ENCODE measurements at regions of chr4 and their contacts with region 1.

Region 1: GRCh38 chr4:26867914-26868684 is 7.5 kb downstream of the STIM2 start:
- DNase-seq: no peak
- ATAC-seq: peak; percentile 36
- H3K4me3 ChIP-seq: no peak overlapping the region; the same call in 1 of the 2 replicates
- H3K27ac ChIP-seq: 0 out of 2 replicates have a peak overlapping the region, but pooled peaks have one; percentile 37
- H3K4me1 ChIP-seq: peaks cover 9% of the 10 kb centered on the region
- H3K27me3 ChIP-seq: no peaks in the 10 kb centered on the region
- CTCF ChIP-seq: no peak
- EP300 ChIP-seq: no peak
- POLR2A ChIP-seq: no peak
- RAD21 ChIP-seq: no peak

Region 2: GRCh38 chr4:26447378-26447777 is 420.7 kb before region 1 on chr4:
- CTCF ChIA-PET with region 1: no interaction called
- POLR2A ChIA-PET with region 1: no interaction called
- RAD21 ChIA-PET with region 1: no interaction called
- SMC1A ChIA-PET with region 1: no interaction called
- in situ Hi-C with region 1: no loop called
- intact Hi-C with region 1: no loop called
- DNase-seq: no peak
- ATAC-seq: no peak
- H3K4me3 ChIP-seq: no peak overlapping the region
- H3K27ac ChIP-seq: no peak overlapping the region
- H3K4me1 ChIP-seq: no peaks in the 10 kb centered on the region
- H3K27me3 ChIP-seq: no peaks in the 10 kb centered on the region
- CTCF ChIP-seq: no peak
- EP300 ChIP-seq: no peak
- POLR2A ChIP-seq: no peak
- RAD21 ChIP-seq: no peak

Region 3: DNA sequence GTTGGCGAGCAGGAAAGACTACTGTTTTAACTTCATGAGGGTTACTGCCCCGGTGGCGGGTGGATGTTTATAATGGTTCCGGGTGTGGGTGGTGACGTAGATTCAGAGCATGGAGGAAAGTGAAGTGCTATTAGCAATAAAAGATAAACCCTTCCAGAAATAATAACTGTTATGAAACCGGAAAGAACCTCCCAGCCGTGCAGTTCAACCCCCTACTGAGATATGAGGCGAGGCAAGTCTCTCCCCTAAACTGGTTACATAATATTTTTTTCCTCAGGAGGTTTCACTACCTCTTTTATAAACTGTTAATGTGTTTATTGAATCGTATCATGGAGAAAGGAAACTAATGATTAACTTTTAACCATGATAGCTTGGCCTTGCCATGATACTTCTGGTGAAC is 41.4 kb before region 1 on chr4:
- CTCF ChIA-PET with region 1: no interaction called
- POLR2A ChIA-PET with region 1: interaction called, 3 read pairs
- RAD21 ChIA-PET with region 1: no interaction called
- SMC1A ChIA-PET with region 1: interaction called, 12 read pairs
- in situ Hi-C with region 1: no loop called
- intact Hi-C with region 1: no loop called
- DNase-seq: peak; percentile 72
- ATAC-seq: peak; percentile 94
- H3K4me3 ChIP-seq: 0 out of 2 replicates have a peak overlapping the region, but pooled peaks have one; percentile 31
- H3K27ac ChIP-seq: peak overlapping the region; percentile 20; the same call in 1 of the 2 replicates
- H3K4me1 ChIP-seq: peaks cover 21% of the 10 kb centered on the region
- H3K27me3 ChIP-seq: no peaks in the 10 kb centered on the region
- CTCF ChIP-seq: no peak
- EP300 ChIP-seq: peak; percentile 91 to 93
- POLR2A ChIP-seq: no peak
- RAD21 ChIP-seq: no peak

Region 4: GRCh38 chr4:26899991-26900390 is 31.9 kb after region 1 on chr4:
- CTCF ChIA-PET with region 1: interaction called, 3 read pairs
- POLR2A ChIA-PET with region 1: no interaction called
- RAD21 ChIA-PET with region 1: interaction called, 10 read pairs
- SMC1A ChIA-PET with region 1: interaction called, 5 read pairs
- in situ Hi-C with region 1: no loop called
- intact Hi-C with region 1: no loop called
- DNase-seq: no peak
- ATAC-seq: peak; percentile 26; the same call in 2 of the 3 replicates
- H3K4me3 ChIP-seq: no peak overlapping the region
- H3K27ac ChIP-seq: no peak overlapping the region
- H3K4me1 ChIP-seq: no peaks in the 10 kb centered on the region
- H3K27me3 ChIP-seq: no peaks in the 10 kb centered on the region
- CTCF ChIP-seq: no peak
- EP300 ChIP-seq: no peak
- POLR2A ChIP-seq: no peak
- RAD21 ChIP-seq: no peak

Region 5: DNA sequence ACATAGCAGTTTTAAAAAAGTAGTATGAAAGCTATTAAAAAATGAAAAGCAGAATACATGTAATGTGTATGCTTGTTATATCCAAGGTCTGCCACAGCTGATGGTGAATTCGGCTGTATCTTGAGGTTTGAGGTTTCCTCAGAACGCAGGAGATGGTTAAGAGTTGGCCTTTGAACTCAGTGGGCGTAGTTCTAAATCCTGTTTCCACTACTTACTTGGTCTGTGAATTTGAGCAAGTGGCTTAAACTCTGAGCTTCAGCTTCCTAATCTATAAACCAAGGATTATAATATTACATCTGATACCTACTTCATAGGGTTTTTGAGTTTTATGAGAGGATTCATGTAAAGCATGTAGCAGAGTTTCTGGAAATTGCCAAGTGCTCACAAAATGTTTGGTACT is 117.8 kb after region 1 on chr4:
- CTCF ChIA-PET with region 1: no interaction called
- POLR2A ChIA-PET with region 1: interaction called, 6 read pairs
- RAD21 ChIA-PET with region 1: interaction called, 25 read pairs
- SMC1A ChIA-PET with region 1: interaction called, 21 read pairs
- in situ Hi-C with region 1: no loop called
- intact Hi-C with region 1: no loop called
- DNase-seq: peak; percentile 44
- ATAC-seq: peak; percentile 96
- H3K4me3 ChIP-seq: no peak overlapping the region
- H3K27ac ChIP-seq: no peak overlapping the region
- H3K4me1 ChIP-seq: peaks cover 14% of the 10 kb centered on the region
- H3K27me3 ChIP-seq: no peaks in the 10 kb centered on the region
- CTCF ChIP-seq: no peak
- EP300 ChIP-seq: 0 out of 4 replicates have a peak, but pooled peaks of 1 of the 2 experiments have one; percentile 21
- POLR2A ChIP-seq: no peak
- RAD21 ChIP-seq: no peak

Region 6: GRCh38 chr4:26992657-26993361 is 124.7 kb after region 1 on chr4:
- CTCF ChIA-PET with region 1: interaction called, 3 read pairs
- POLR2A ChIA-PET with region 1: interaction called, 16 read pairs
- RAD21 ChIA-PET with region 1: interaction called, 25 read pairs
- SMC1A ChIA-PET with region 1: interaction called, 21 read pairs
- in situ Hi-C with region 1: no loop called
- intact Hi-C with region 1: no loop called
- DNase-seq: peak; percentile 72
- ATAC-seq: peak; percentile 94
- H3K4me3 ChIP-seq: peak overlapping the region; percentile 39; the same call in 1 of the 2 replicates
- H3K27ac ChIP-seq: peak overlapping the region; percentile 89
- H3K4me1 ChIP-seq: peaks cover 21% of the 10 kb centered on the region
- H3K27me3 ChIP-seq: no peaks in the 10 kb centered on the region
- CTCF ChIP-seq: no peak
- EP300 ChIP-seq: peak; percentile 78 to 84
- POLR2A ChIP-seq: no peak
- RAD21 ChIP-seq: no peak

Region 7: DNA sequence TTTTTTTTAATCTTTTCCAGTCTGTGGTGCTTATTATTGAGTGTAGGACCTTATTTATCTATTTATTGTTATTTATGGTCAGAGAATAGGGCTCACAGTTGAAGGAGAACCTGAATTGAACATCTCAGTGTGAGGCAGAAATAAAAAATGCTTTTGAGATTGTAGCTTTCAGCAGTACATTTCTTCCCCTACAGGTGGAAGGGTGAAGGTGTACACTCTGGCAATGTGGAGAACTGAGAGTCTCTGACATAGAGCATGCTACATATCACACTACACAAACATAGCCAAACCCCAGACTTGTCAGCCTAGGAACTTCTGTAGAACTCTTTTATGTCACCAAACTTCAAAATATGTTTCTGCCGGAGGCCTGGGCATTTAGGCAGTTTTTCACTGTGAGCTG is 132.7 kb after region 1 on chr4:
- CTCF ChIA-PET with region 1: interaction called, 5 read pairs
- POLR2A ChIA-PET with region 1: no interaction called
- RAD21 ChIA-PET with region 1: interaction called, 5 read pairs
- SMC1A ChIA-PET with region 1: interaction called, 14 read pairs
- in situ Hi-C with region 1: no loop called
- intact Hi-C with region 1: no loop called
- DNase-seq: no peak
- ATAC-seq: peak; percentile 98
- H3K4me3 ChIP-seq: no peak overlapping the region
- H3K27ac ChIP-seq: no peak overlapping the region
- H3K4me1 ChIP-seq: peaks cover 6% of the 10 kb centered on the region; the same call in 1 of the 2 replicates
- H3K27me3 ChIP-seq: no peaks in the 10 kb centered on the region
- CTCF ChIP-seq: peak; percentile 51 to 64 (median 55)
- EP300 ChIP-seq: no peak
- POLR2A ChIP-seq: no peak
- RAD21 ChIP-seq: peak; percentile 82